ENCODE measurements at regions of chr7 and their contacts with region 1.

Region 1: DNA sequence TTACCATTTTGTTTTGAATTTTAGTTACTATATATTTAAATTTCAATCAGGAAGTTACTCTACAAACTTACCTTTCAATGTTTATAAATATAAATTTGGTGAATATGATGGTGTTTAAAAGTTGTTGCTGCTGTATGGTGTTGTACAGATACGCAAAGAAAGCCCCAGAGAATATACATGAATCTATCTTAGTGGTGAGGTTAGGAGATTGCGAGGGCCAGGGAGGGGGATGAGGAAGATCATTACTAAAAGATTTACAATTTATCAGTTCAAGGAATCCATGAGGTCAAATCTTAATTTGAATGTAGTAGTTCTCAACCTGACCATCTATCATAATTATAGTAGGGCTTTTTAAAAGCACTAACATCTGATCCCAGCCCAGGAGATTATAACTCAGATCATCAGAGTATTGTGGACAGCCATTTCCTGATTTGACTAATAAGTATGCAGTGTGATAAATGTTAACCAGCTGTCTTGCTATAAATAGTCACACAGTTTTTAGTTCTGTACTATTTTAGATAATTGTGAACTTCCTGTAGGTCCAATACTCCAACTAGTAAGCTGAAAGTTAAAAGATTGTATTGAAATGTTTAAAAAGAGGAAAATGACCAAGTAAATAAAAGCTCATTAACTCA is 23.6 kb downstream of the FAM3C start:
- DNase-seq: peak in 1 of 35 experiments; percentile 22
- ATAC-seq: peak in 2 of 4 experiments; percentile 32 to 49
- H3K4me3 ChIP-seq: no peak overlapping the region
- H3K4me3 Mint-ChIP-seq: peak overlapping the region in 1 of 3 donors; percentile 34
- H3K27ac ChIP-seq: peak overlapping the region; percentile 27
- H3K27ac Mint-ChIP-seq: peak overlapping the region; percentile 9 to 63
- H3K4me1 ChIP-seq: no peaks in the 10 kb centered on the region
- H3K4me1 Mint-ChIP-seq: peaks cover 19 to 41% (median 26%) of the 10 kb centered on the region in 3 donors
- H3K27me3 ChIP-seq: no peaks in the 10 kb centered on the region
- H3K27me3 Mint-ChIP-seq: no peaks in the 10 kb centered on the region

Region 2: GRCh38 chr7:121273467-121274167 is 98.9 kb before region 1 on chr7:
- CTCF ChIA-PET with region 1: no interaction called
- POLR2A ChIA-PET with region 1: no interaction called
- DNase-seq: no peak
- ATAC-seq: no peak
- H3K4me3 ChIP-seq: no peak overlapping the region
- H3K4me3 Mint-ChIP-seq: no peak overlapping the region
- H3K27ac ChIP-seq: no peak overlapping the region
- H3K27ac Mint-ChIP-seq: no peak overlapping the region
- H3K4me1 ChIP-seq: no peaks in the 10 kb centered on the region
- H3K4me1 Mint-ChIP-seq: no peaks in the 10 kb centered on the region
- H3K27me3 ChIP-seq: no peaks in the 10 kb centered on the region
- H3K27me3 Mint-ChIP-seq: peaks cover 11 to 14% of the 10 kb centered on the region in 2 donors

Region 3: DNA sequence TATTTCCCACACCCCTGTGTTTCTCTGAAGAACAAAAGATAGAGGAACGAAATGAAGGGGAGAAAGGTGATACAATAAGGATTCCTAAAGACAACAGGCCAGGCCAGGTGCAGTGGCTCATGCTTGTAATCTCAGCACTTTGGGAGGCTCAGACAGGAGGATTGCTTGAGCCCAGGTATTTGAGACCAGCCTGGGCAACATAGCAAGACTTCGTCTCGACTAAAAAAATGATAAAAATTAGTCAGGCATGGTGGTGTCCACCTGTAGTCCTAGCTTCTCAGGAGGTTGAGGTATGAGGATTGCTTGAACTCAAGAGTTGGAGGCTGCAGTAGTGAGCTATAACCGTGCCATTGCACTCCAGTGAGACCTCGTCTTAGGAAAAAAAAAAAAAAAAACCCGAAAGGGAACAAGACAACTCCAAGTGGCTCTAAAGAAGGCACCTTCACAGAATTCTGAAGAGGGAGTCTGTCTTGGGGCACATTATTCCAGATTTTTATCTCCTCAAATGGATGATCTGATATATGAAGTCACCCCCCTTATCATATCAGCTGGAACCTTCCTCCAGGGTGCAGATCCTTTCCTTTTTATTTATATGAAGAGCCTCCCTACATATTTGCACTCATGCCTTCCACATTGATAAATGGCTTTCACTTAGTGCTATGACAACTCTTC is 65.1 kb after region 1 on chr7:
- CTCF ChIA-PET with region 1: interaction called, 3 to 15 read pairs
- POLR2A ChIA-PET with region 1: interaction called in 1 of 2 experiments, 3 read pairs
- DNase-seq: no peak
- ATAC-seq: peak in 2 of 4 experiments; percentile 21 to 23
- H3K4me3 ChIP-seq: no peak overlapping the region
- H3K4me3 Mint-ChIP-seq: peak overlapping the region; percentile 66 to 72 (median 68)
- H3K27ac ChIP-seq: peak overlapping the region; percentile 62
- H3K27ac Mint-ChIP-seq: peak overlapping the region; percentile 97
- H3K4me1 ChIP-seq: peaks cover 9 to 22% of the 10 kb centered on the region in 2 experiments
- H3K4me1 Mint-ChIP-seq: peaks cover 26 to 53% (median 41%) of the 10 kb centered on the region in 3 donors
- H3K27me3 ChIP-seq: no peaks in the 10 kb centered on the region
- H3K27me3 Mint-ChIP-seq: no peaks in the 10 kb centered on the region

Measured in T-cell (primary cell).